ENCODE measurements at regions of chr2 and their contacts with region 1.

Region 1: DNA sequence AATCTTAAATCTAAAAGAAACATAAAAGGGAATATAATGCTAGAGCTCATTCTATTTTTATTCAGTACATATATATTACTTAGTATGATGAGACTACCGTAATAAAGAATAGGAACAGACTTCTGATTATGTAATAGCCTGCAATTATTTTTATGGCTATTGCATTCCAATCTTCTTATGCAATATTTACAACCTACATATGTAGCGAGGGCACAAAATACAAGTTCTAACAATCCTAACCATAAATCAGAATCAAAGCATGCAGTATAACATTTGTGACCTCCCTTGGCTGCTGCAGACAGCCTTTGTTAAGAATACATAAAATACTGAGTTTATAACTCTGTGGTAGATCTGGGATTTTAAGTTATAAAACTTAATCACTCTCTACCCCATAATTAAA is 177.6 kb downstream of the BABAM2 start:
- DNase-seq: peak in 1 of 2 experiments; percentile 37
- H3K4me3 ChIP-seq: no peak overlapping the region
- H3K4me3 Mint-ChIP-seq: no peak overlapping the region
- H3K27ac Mint-ChIP-seq: no peak overlapping the region
- H3K4me1 ChIP-seq: peaks cover 19% of the 10 kb centered on the region
- H3K4me1 Mint-ChIP-seq: peaks cover 7% of the 10 kb centered on the region
- H3K27me3 ChIP-seq: no peaks in the 10 kb centered on the region
- H3K27me3 Mint-ChIP-seq: no peaks in the 10 kb centered on the region
- CTCF ChIP-seq: no peak

Region 2: GRCh38 chr2:27977608-27978312 is 90.3 kb before region 1 on chr2:
- CTCF ChIA-PET with region 1: no interaction called
- POLR2A ChIA-PET with region 1: no interaction called
- intact Hi-C with region 1: loop called (anchors 5 kb)
- DNase-seq: no peak
- H3K4me3 ChIP-seq: no peak overlapping the region
- H3K4me3 Mint-ChIP-seq: no peak overlapping the region
- H3K27ac Mint-ChIP-seq: no peak overlapping the region
- H3K4me1 ChIP-seq: no peaks in the 10 kb centered on the region
- H3K4me1 Mint-ChIP-seq: no peaks in the 10 kb centered on the region
- H3K27me3 ChIP-seq: no peaks in the 10 kb centered on the region
- H3K27me3 Mint-ChIP-seq: no peaks in the 10 kb centered on the region
- CTCF ChIP-seq: no peak

Measured in Caco-2 (cell line).